Pancreas (tissue), 10 donors: ENCODE measurements at regions of chr1 and their contacts with region 1.

Region 1: GRCh38 chr1:29235955-29236684 is at the start of gene PTPRU:
- DNase-seq: peak; percentile 72 to 98 (median 89)
- ATAC-seq: peak; percentile 84 to 88 (median 86)
- H3K4me3 ChIP-seq: peak within 1 kb of the TSS; percentile 43 to 72 (median 62)
- H3K27ac ChIP-seq: peak within 1 kb of the TSS; percentile 31 to 58 (median 46)
- H3K4me1 ChIP-seq: no peaks in the 10 kb centered on the region
- H3K27me3 ChIP-seq: no peaks in the 10 kb centered on the region
- CTCF ChIP-seq: peak; percentile 70 to 74 (median 74)
- total RNA-seq, gene PTPRU: 12.3 to 20.9 (median 15.7) TPM

Region 2: GRCh38 chr1:29368936-29369932 is 133.1 kb after region 1 on chr1:
- intact Hi-C with region 1: no loop called
- DNase-seq: no peak
- ATAC-seq: no peak
- H3K4me3 ChIP-seq: no peak overlapping the region
- H3K27ac ChIP-seq: no peak overlapping the region
- H3K4me1 ChIP-seq: no peaks in the 10 kb centered on the region
- H3K27me3 ChIP-seq: no peaks in the 10 kb centered on the region
- CTCF ChIP-seq: no peak

Region 3: GRCh38 chr1:30713311-30713710 is 1477.2 kb after region 1 on chr1:
- intact Hi-C with region 1: loop called in 1 of 3 experiments (anchors 5 kb)
- DNase-seq: no peak
- ATAC-seq: no peak
- H3K4me3 ChIP-seq: no peak overlapping the region
- H3K27ac ChIP-seq: no peak overlapping the region
- H3K4me1 ChIP-seq: no peaks in the 10 kb centered on the region
- H3K27me3 ChIP-seq: no peaks in the 10 kb centered on the region
- CTCF ChIP-seq: no peak